ENCODE measurements at regions of chr3 and their contacts with region 1.

Region 1: DNA sequence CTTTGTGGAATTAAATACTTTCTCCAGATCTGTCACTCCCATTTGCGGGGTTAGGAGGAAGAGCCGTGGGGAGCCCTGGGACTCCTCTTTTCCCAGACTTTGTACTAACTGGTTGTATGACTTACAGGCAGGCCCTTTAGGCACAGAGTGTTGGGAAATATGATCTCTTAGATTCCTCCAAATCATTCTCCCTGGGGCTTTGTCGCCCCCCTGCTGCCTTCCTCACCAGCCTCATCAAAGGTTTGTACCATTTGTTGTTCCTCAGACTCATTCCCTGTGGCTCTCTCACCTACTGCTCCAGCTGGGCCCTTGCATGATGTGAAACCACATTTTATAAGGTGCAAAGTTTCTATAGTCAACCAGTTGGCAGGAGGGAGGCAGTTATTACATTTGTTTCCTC is 56.4 kb downstream of the CRYGS start:
- DNase-seq: peak; percentile 17
- ATAC-seq: peak; percentile 13; the same call in 1 of the 2 replicates
- H3K4me3 ChIP-seq: no peak overlapping the region
- H3K27ac ChIP-seq: no peak overlapping the region
- H3K4me1 ChIP-seq: no peaks in the 10 kb centered on the region
- H3K27me3 ChIP-seq: peaks cover 36% of the 10 kb centered on the region
- CTCF ChIP-seq: peak; percentile 18; the same call in 1 of the 2 replicates

Region 2: DNA sequence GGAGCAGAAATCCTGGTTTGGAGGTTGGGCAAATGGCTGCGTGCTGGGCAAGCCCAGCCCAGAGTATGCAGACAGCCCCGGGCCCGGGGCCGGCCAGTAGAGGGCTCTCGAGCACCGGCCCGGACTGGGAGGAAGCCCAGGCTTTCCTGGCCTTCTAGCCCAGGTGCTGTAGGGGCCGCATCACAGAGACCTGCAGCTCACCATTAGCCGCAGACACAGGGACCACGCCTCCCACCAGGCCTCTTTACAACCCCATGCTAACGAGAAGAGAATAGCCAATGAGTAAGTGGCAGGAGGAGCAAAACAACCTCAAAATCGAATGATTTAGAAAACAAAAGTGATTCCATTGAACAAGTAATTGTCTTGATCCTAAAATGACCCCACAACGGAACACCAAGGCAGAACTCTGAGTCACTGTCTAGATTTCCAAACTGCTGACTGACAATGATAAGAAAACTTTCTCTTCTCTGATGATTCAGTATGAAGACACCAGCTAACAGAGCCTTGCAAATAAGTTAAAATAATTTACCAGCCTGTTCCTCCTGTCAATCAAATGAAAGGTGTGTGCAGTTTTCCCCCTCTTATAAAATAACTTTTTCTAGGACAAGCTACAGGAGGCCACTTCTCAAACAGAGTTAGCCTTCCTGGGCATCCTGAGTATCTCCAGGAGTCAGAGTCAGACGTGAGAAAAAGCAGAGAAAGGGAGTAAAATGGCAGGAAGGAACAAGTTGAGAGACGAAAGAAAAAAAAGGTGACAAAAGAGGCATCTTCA is 228.0 kb before region 1 on chr3:
- CTCF ChIA-PET with region 1: no interaction called
- POLR2A ChIA-PET with region 1: no interaction called
- intact Hi-C with region 1: loop called (anchors 1 kb)
- DNase-seq: peak; percentile 92
- ATAC-seq: peak; percentile 100
- H3K4me3 ChIP-seq: peak overlapping the region; percentile 50
- H3K27ac ChIP-seq: no peak overlapping the region
- H3K4me1 ChIP-seq: peaks cover 14% of the 10 kb centered on the region
- H3K27me3 ChIP-seq: no peaks in the 10 kb centered on the region
- CTCF ChIP-seq: peak; percentile 96

Region 3: GRCh38 chr3:186342197-186342596 is 145.6 kb before region 1 on chr3:
- CTCF ChIA-PET with region 1: no interaction called
- POLR2A ChIA-PET with region 1: no interaction called
- intact Hi-C with region 1: loop called (anchors 10 kb)
- DNase-seq: no peak
- ATAC-seq: no peak
- H3K4me3 ChIP-seq: no peak overlapping the region
- H3K27ac ChIP-seq: no peak overlapping the region
- H3K4me1 ChIP-seq: no peaks in the 10 kb centered on the region
- H3K27me3 ChIP-seq: 0 out of 2 replicates have a peak, but pooled peaks cover 14% of the 10 kb centered on the region
- CTCF ChIP-seq: no peak